ENCODE measurements at regions of chr4 and their contacts with region 1.

Region 1: GRCh38 chr4:82551714-82552113 is 10.1 kb downstream of the TMEM150C start:
- DNase-seq: no peak
- ATAC-seq: no peak

Region 2: DNA sequence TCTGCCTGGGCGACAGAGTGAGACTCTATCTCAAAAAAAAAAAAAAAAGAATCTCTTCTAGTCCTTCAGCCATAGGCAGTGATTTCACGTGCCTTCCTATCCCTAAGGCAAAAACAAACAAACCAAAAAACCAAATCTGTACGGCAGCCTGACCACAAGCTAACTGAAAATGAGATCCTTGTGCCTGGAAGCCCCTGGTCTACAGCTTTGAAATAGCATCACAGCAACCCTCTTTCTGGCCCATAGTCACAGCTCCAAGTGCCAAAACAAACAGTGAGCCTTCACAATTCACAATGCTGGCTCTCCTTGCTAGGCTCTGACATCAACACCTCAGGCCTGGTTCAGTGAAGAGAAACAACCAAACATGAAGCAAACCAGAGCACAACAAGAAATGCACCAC is 36.0 kb before region 1 on chr4:
- intact Hi-C with region 1: loop called (anchors 5 kb)
- DNase-seq: no peak
- ATAC-seq: peak; percentile 93

Region 3: DNA sequence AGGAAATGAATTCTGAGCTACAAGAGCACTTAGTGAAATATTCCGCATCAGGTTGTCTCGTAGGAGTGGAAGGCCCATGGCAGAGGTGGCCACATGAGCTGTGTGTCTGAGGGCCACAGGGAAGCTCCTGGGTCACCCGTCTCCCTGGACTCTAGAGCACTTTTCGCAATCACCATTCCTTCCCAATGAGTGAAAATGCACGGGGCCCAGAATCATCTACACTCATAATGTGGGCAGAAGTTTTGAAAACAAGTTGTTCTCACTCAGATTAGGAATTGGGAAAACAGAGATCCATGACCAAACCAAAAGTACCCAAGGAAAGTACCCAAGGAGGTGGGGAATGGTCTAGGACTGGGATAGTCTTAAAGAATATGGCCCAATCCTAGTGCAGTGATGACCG is 152.4 kb after region 1 on chr4:
- intact Hi-C with region 1: no loop called
- DNase-seq: no peak
- ATAC-seq: no peak